HepG2 (cell line): ENCODE measurements at regions of chr16 and their contacts with region 1.

Region 1: GRCh38 chr16:2867987-2868789 is 10.2 kb upstream of the PRSS22 start:
- DNase-seq: peak; percentile 82
- ATAC-seq: peak; percentile 93
- H3K4me3 ChIP-seq: peak overlapping the region; percentile 65 to 83 (median 80)
- H3K27ac ChIP-seq: peak overlapping the region; percentile 73
- H3K4me1 ChIP-seq: peaks cover 29% of the 10 kb centered on the region
- H3K27me3 ChIP-seq: peaks cover 0 to 7% of the 10 kb centered on the region in 2 experiments; a peak in 1 of 5 replicates
- CTCF ChIP-seq: peak; percentile 97
- EP300 ChIP-seq: no peak
- POLR2A ChIP-seq: peak; percentile 81 to 83
- RAD21 ChIP-seq: peak; percentile 96

Region 2: DNA sequence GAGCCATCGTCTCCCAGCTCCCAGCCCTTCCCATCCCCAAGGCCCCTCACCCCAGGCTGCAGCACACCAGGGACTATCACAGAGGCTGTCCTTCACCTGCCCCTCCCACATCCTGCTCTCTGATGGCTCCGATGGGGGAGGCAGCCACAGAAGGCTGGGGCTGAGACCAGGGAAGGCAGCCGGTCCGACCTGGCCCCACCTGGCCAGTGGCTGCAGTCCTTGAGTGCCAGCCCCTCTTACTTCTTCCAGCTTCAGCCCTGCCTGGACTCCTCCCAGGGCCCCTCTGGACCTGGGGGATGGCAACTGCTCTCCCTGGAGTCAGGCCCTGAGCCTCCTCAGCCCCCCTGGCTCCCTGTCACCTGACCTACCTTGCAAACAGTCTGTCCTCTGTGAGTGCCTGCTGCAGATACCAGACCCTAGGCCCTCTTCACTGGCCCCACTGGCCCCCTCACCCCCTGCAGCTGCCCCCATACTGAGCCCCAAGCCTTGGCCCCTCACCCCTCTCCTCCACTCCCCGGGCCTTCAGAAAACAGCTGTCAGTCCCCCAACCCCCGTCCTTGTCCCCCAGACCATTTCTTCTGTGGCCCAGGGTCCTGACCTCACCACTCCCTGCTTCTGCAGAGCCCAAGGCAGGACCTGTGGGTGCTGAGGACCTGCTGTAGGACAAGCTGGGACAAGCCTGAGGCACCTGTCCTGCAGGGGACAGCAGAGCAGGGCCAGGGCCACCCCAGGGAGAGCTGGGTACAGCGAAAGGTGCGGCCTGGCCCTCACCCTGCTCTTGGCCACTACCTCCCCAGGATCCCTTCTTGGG is 128.4 kb before region 1 on chr16:
- CTCF ChIA-PET with region 1: no interaction called
- POLR2A ChIA-PET with region 1: no interaction called
- in situ Hi-C with region 1: no loop called
- intact Hi-C with region 1: no loop called
- DNase-seq: peak; percentile 45
- ATAC-seq: peak; percentile 78
- H3K4me3 ChIP-seq: peak overlapping the region in 2 of 3 experiments; percentile 35 to 47; a peak in 4 of 6 replicates
- H3K27ac ChIP-seq: no peak overlapping the region
- H3K4me1 ChIP-seq: peaks cover 40% of the 10 kb centered on the region
- H3K27me3 ChIP-seq: no peaks in the 10 kb centered on the region
- CTCF ChIP-seq: no peak
- EP300 ChIP-seq: no peak
- POLR2A ChIP-seq: peak in 1 of 2 experiments; percentile 47; a peak in 1 of 4 replicates
- RAD21 ChIP-seq: no peak

Region 3: DNA sequence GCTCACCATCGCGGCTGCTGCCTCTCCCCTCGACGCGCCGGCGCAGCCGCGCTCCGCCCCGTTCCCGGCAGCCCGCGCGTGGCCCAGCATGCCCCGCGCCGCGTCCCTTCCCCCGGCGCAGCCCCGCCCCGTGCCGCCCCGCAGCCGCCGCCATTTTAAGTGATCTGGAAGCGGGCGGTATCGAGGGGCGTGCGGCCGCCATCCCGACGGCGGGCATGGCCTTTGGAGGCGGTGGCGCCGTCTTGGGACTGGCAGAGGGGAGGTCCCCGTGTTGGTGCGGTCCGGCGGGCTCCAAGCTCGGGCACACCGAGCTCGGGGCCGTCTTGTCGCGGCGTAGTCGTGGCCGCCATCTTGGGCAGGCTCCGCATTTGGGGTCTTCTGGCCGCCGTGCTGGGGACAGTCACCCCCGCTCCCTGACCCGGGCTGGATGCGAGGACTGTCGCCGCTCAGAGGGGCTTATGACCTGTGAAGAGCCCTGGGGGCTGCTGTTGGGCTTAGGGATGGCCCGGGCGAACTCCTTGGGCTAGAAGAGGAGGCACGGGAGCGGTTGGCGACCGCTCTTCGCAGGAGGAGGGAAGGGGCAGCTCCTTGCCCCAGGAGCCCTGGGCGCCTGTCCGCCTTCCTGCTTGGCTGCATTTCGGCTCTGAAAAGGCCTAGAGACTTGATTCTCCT is 90.8 kb before region 1 on chr16 and contains the start of gene ELOB:
- CTCF ChIA-PET with region 1: no interaction called
- POLR2A ChIA-PET with region 1: no interaction called
- in situ Hi-C with region 1: no loop called
- intact Hi-C with region 1: no loop called
- DNase-seq: peak; percentile 50
- ATAC-seq: peak; percentile 79
- H3K4me3 ChIP-seq: peak within 1 kb of the TSS; percentile 83 to 100 (median 98)
- H3K27ac ChIP-seq: peak within 1 kb of the TSS; percentile 95
- H3K4me1 ChIP-seq: peaks cover 25% of the 10 kb centered on the region
- H3K27me3 ChIP-seq: peaks cover 0 to 2% of the 10 kb centered on the region in 2 experiments; a peak in 3 of 5 replicates
- CTCF ChIP-seq: no peak
- EP300 ChIP-seq: no peak; a peak in 1 of 4 replicates
- POLR2A ChIP-seq: peak; percentile 71 to 80
- RAD21 ChIP-seq: peak; percentile 53; the same call in 1 of the 2 replicates
- total RNA-seq, gene ELOB: 208 and 253 TPM in 2 replicates

Region 4: DNA sequence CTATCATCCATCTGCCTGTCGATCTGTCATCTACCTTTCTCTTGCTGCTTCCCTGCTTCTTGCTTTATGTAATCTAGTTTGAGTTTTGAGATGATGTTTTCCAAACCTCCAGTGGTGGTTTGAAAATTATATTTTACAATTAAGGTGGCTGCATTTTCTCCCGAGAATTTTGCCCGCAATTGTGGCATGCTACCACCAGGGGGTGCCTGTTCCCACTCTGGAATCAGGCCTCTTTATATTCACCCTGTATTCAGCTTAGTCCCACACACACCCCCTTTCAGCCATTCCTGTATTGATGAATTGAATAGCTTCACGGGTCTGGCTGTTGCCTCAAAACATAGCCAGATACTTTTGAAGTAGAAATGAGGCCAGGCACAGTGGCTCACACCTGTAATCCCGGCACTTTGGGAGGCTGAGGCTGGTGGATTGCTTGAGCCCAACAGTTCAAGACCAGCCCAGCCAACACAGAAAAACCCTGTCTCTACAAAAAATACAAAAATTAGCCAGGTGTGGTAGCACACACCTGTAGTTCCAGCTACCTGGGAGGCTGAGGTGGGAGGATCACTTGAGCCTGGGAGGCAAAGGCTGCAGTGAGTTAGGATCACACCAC is 13.4 kb before region 1 on chr16:
- CTCF ChIA-PET with region 1: interaction called, 30 read pairs
- POLR2A ChIA-PET with region 1: interaction called, 15 read pairs
- in situ Hi-C with region 1: no loop called
- intact Hi-C with region 1: loop called (anchors 1 kb)
- DNase-seq: no peak
- ATAC-seq: no peak
- H3K4me3 ChIP-seq: no peak overlapping the region
- H3K27ac ChIP-seq: no peak overlapping the region
- H3K4me1 ChIP-seq: peaks cover 16% of the 10 kb centered on the region
- H3K27me3 ChIP-seq: peaks cover 2 to 7% of the 10 kb centered on the region in 2 experiments; a peak in 3 of 5 replicates
- CTCF ChIP-seq: peak; percentile 64
- EP300 ChIP-seq: no peak
- POLR2A ChIP-seq: no peak
- RAD21 ChIP-seq: no peak

Region 5: GRCh38 chr16:2883027-2883851 is 15.1 kb after region 1 on chr16 and contains the start of gene FLYWCH2:
- CTCF ChIA-PET with region 1: no interaction called
- POLR2A ChIA-PET with region 1: interaction called, 20 read pairs
- in situ Hi-C with region 1: no loop called
- intact Hi-C with region 1: no loop called
- DNase-seq: peak; percentile 91
- ATAC-seq: peak; percentile 88
- H3K4me3 ChIP-seq: peak within 1 kb of the TSS; percentile 86 to 95 (median 94)
- H3K27ac ChIP-seq: peak within 1 kb of the TSS; percentile 76
- H3K4me1 ChIP-seq: peaks cover 9% of the 10 kb centered on the region
- H3K27me3 ChIP-seq: no peaks in the 10 kb centered on the region
- CTCF ChIP-seq: peak; percentile 37; the same call in 1 of the 2 replicates
- EP300 ChIP-seq: no peak
- POLR2A ChIP-seq: peak; percentile 73 to 83
- RAD21 ChIP-seq: no peak
- total RNA-seq, gene FLYWCH2: 19.8 and 20.2 TPM in 2 replicates

Region 6: GRCh38 chr16:2905431-2906387 is 37.5 kb after region 1 on chr16:
- CTCF ChIA-PET with region 1: no interaction called
- POLR2A ChIA-PET with region 1: interaction called, 28 read pairs
- in situ Hi-C with region 1: loop called (anchors 5 kb)
- intact Hi-C with region 1: loop called (anchors 5 kb)
- DNase-seq: peak; percentile 97
- ATAC-seq: peak; percentile 81
- H3K4me3 ChIP-seq: peak overlapping the region; percentile 82 to 96 (median 95); a peak in 5 of 6 replicates
- H3K27ac ChIP-seq: peak overlapping the region; percentile 83
- H3K4me1 ChIP-seq: peaks cover 19% of the 10 kb centered on the region
- H3K27me3 ChIP-seq: no peaks in the 10 kb centered on the region; a peak in 1 of 5 replicates
- CTCF ChIP-seq: no peak
- EP300 ChIP-seq: no peak
- POLR2A ChIP-seq: no peak
- RAD21 ChIP-seq: no peak

Region 7: DNA sequence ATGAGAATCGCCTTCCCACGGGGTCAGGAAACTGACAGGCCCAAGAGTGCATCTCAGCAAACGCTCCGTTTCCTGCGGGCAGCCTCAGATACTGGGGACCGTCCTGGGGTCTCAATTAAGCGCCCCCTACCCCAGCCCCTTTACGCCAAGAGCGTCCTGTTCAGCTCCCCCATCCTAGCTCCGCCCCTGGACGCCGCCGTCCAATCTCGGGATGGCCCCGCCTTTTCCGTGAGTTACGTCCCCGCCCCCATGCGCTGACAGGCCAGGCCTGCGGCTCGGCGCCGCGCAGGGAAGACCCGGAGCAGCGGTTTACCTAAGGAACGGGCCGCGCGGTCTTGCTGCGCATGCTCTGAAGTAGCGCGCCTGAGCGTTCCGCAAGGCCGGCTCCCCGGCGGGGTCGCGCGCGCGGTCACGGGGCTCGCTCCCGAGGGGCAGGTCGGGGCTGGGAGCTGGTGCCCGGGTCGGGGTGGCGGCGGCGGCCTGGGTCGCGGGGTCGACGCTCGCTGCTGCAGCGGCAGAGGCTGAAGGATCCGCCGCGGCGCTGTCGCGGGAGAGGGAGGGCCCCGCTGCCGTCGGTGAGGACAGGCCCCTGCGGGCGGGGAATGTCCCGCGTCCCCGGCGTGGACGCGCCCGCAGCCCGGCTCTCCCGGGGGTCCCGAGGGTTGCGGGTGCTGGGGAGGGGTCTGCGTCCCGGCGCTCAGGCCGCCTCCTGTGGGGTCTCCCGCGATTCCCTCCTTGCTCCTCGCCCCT is 43.6 kb after region 1 on chr16 and contains the start of gene FLYWCH1:
- CTCF ChIA-PET with region 1: no interaction called
- POLR2A ChIA-PET with region 1: interaction called, 28 read pairs
- in situ Hi-C with region 1: loop called (anchors 5 kb)
- intact Hi-C with region 1: loop called (anchors 5 kb)
- DNase-seq: peak; percentile 92
- ATAC-seq: peak; percentile 93
- H3K4me3 ChIP-seq: peak within 1 kb of the TSS; percentile 65 to 76 (median 76)
- H3K27ac ChIP-seq: peak within 1 kb of the TSS; percentile 44
- H3K4me1 ChIP-seq: peaks cover 18% of the 10 kb centered on the region
- H3K27me3 ChIP-seq: no peaks in the 10 kb centered on the region; a peak in 1 of 5 replicates
- CTCF ChIP-seq: 0 out of 2 replicates have a peak, but pooled peaks have one; percentile 24
- EP300 ChIP-seq: peak in 1 of 2 experiments; percentile 15; a peak in 1 of 4 replicates
- POLR2A ChIP-seq: peak; percentile 24 to 71; a peak in 2 of 4 replicates
- RAD21 ChIP-seq: peak; percentile 58; the same call in 1 of the 2 replicates
- total RNA-seq, gene FLYWCH1: 9.9 and 12.4 TPM in 2 replicates